Activated T-helper 1 cell treated with anti-CD3 and anti-CD28 coated beads, Interleukin-12 subunit alpha, Interleukin-12 subunit beta, Interleukin-2, Interleukin-4 antibody, amounts not matched to agents 30 ng/mL and 10 ng/mL and 1 ng/mL, durations not matched to agents 14 hours and 24 hours and 36 hours (primary cell): ENCODE measurements at regions of chr16 and their contacts with region 1.

Region 1: GRCh38 chr16:65671-66137 is 6.7 kb downstream of the RHBDF1 start:
- DNase-seq: peak; percentile 75
- H3K4me3 Mint-ChIP-seq: no peak overlapping the region
- H3K27ac Mint-ChIP-seq: no peak overlapping the region
- H3K4me1 Mint-ChIP-seq: peaks cover 7% of the 10 kb centered on the region
- H3K27me3 Mint-ChIP-seq: peaks cover 30% of the 10 kb centered on the region

Region 2: GRCh38 chr16:45454-45853 is 20.2 kb before region 1 on chr16:
- intact Hi-C with region 1: no loop called
- DNase-seq: no peak
- H3K4me3 Mint-ChIP-seq: no peak overlapping the region
- H3K27ac Mint-ChIP-seq: no peak overlapping the region
- H3K4me1 Mint-ChIP-seq: peaks cover 21% of the 10 kb centered on the region
- H3K27me3 Mint-ChIP-seq: no peaks in the 10 kb centered on the region

Region 3: GRCh38 chr16:77807-78443 is 12.2 kb after region 1 on chr16 and contains the start of gene MPG:
- intact Hi-C with region 1: loop called (anchors 1 kb)
- DNase-seq: peak; percentile 86
- H3K4me3 Mint-ChIP-seq: peak within 1 kb of the TSS; percentile 90
- H3K27ac Mint-ChIP-seq: peak within 1 kb of the TSS; percentile 78
- H3K4me1 Mint-ChIP-seq: peaks cover 25% of the 10 kb centered on the region
- H3K27me3 Mint-ChIP-seq: peaks cover 17% of the 10 kb centered on the region
- total RNA-seq, gene MPG: 73.9 and 77.5 TPM in 2 replicates

Region 4: DNA sequence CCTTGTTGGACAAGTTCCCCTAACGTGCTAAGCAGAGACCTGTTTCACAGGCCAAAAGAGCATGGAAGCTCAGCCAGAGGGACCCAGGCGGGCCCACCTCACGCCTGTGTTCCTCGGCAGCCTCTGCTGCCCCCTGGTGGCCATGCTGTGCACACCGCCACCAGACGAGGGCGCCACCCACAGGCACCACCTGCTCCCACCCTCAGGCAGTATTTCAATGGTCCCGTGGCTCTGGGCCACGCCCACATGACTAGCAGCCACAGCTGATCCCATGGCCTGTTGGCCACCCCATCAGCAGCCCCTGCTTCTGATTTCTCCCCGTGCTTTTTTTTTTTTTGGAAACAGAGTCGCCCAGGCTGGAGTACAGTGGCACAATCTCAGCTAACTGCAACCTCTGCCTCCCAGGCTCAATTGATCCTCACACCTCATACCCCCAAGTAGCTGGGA is 31.3 kb after region 1 on chr16:
- intact Hi-C with region 1: loop called (anchors 1 kb)
- DNase-seq: peak; percentile 86
- H3K4me3 Mint-ChIP-seq: no peak overlapping the region
- H3K27ac Mint-ChIP-seq: peak overlapping the region; percentile 48
- H3K4me1 Mint-ChIP-seq: no peaks in the 10 kb centered on the region
- H3K27me3 Mint-ChIP-seq: no peaks in the 10 kb centered on the region

Region 5: GRCh38 chr16:361872-362701 is 296.4 kb after region 1 on chr16:
- intact Hi-C with region 1: loop called (anchors 1 kb)
- DNase-seq: peak; percentile 60
- H3K4me3 Mint-ChIP-seq: no peak overlapping the region
- H3K27ac Mint-ChIP-seq: no peak overlapping the region
- H3K4me1 Mint-ChIP-seq: peaks cover 6% of the 10 kb centered on the region
- H3K27me3 Mint-ChIP-seq: peaks cover 1% of the 10 kb centered on the region